ENCODE measurements at regions of chr6 and their contacts with region 1.

Region 1: GRCh38 chr6:130600880-130601341 is 226.3 kb upstream of the SMLR1 start:
- DNase-seq: no peak
- ATAC-seq: no peak
- H3K4me3 ChIP-seq: no peak overlapping the region
- H3K27ac ChIP-seq: no peak overlapping the region
- H3K4me1 ChIP-seq: no peaks in the 10 kb centered on the region
- H3K27me3 ChIP-seq: no peaks in the 10 kb centered on the region
- CTCF ChIP-seq: no peak
- EP300 ChIP-seq: no peak
- POLR2A ChIP-seq: no peak
- RAD21 ChIP-seq: no peak

Region 2: DNA sequence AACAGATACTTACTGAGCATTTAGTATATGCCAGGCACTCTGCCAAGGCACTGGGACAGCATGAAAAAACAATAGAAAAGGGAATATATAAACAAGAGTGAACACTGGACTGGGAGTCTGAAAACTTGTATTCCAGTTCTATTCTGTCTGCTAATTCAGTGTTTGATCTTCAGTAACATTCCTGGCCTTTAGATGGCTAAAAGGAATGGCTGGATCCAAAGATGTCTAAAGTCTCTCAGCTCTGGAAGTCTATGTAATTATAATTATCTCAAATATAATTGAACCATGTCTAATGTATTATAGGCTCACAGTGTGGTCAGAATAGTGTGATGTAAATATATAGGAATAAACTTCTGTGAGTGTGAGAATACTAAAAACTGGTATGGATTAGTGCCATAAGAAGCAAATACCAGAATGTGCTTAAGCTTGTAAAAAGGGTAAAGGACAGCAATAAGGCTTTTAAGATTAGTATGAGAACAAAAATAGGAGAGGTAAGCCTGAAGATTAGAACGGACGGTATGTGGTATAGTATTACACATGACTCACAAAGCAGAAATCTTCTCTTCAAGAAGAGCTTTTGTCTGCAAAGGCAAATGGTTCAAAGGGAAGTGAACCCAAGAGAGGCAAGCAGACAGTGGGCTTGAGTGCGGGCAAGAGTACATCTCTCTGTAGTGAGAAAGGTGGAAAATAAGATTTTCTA is 166.6 kb before region 1 on chr6:
- CTCF ChIA-PET with region 1: no interaction called
- POLR2A ChIA-PET with region 1: no interaction called
- RAD21 ChIA-PET with region 1: no interaction called
- SMC1A ChIA-PET with region 1: no interaction called
- in situ Hi-C with region 1: no loop called
- intact Hi-C with region 1: no loop called
- DNase-seq: no peak
- ATAC-seq: no peak
- H3K4me3 ChIP-seq: no peak overlapping the region
- H3K27ac ChIP-seq: no peak overlapping the region
- H3K4me1 ChIP-seq: no peaks in the 10 kb centered on the region
- H3K27me3 ChIP-seq: no peaks in the 10 kb centered on the region
- CTCF ChIP-seq: no peak
- EP300 ChIP-seq: no peak
- POLR2A ChIP-seq: no peak
- RAD21 ChIP-seq: no peak

Region 3: GRCh38 chr6:130587778-130588520 is 13.0 kb before region 1 on chr6:
- CTCF ChIA-PET with region 1: interaction called, 11 read pairs
- POLR2A ChIA-PET with region 1: no interaction called
- RAD21 ChIA-PET with region 1: interaction called, 6 read pairs
- SMC1A ChIA-PET with region 1: interaction called, 11 read pairs
- in situ Hi-C with region 1: no loop called
- intact Hi-C with region 1: no loop called
- DNase-seq: no peak
- ATAC-seq: no peak
- H3K4me3 ChIP-seq: no peak overlapping the region
- H3K27ac ChIP-seq: no peak overlapping the region
- H3K4me1 ChIP-seq: no peaks in the 10 kb centered on the region
- H3K27me3 ChIP-seq: no peaks in the 10 kb centered on the region
- CTCF ChIP-seq: no peak
- EP300 ChIP-seq: no peak
- POLR2A ChIP-seq: no peak
- RAD21 ChIP-seq: no peak

Region 4: GRCh38 chr6:130620338-130620781 is 19.4 kb after region 1 on chr6:
- CTCF ChIA-PET with region 1: interaction called, 3 read pairs
- POLR2A ChIA-PET with region 1: interaction called, 4 read pairs
- RAD21 ChIA-PET with region 1: interaction called, 8 read pairs
- SMC1A ChIA-PET with region 1: interaction called, 15 read pairs
- in situ Hi-C with region 1: no loop called
- intact Hi-C with region 1: no loop called
- DNase-seq: no peak
- ATAC-seq: peak; percentile 47
- H3K4me3 ChIP-seq: no peak overlapping the region
- H3K27ac ChIP-seq: no peak overlapping the region
- H3K4me1 ChIP-seq: peaks cover 3% of the 10 kb centered on the region; the same call in 1 of the 2 replicates
- H3K27me3 ChIP-seq: no peaks in the 10 kb centered on the region
- CTCF ChIP-seq: no peak
- EP300 ChIP-seq: no peak
- POLR2A ChIP-seq: no peak
- RAD21 ChIP-seq: no peak

Region 5: GRCh38 chr6:130655586-130655985 is 54.7 kb after region 1 on chr6:
- CTCF ChIA-PET with region 1: no interaction called
- POLR2A ChIA-PET with region 1: no interaction called
- RAD21 ChIA-PET with region 1: no interaction called
- SMC1A ChIA-PET with region 1: no interaction called
- in situ Hi-C with region 1: no loop called
- intact Hi-C with region 1: no loop called
- DNase-seq: no peak
- ATAC-seq: no peak
- H3K4me3 ChIP-seq: no peak overlapping the region
- H3K27ac ChIP-seq: no peak overlapping the region
- H3K4me1 ChIP-seq: no peaks in the 10 kb centered on the region
- H3K27me3 ChIP-seq: no peaks in the 10 kb centered on the region
- CTCF ChIP-seq: no peak
- EP300 ChIP-seq: no peak
- POLR2A ChIP-seq: no peak
- RAD21 ChIP-seq: no peak